ENCODE measurements at regions of chrX and their contacts with region 1.

Region 1: GRCh38 chrX:39261446-39262147 is 460.3 kb downstream of the MID1IP1 start:
- DNase-seq: peak; percentile 74
- H3K4me3 Mint-ChIP-seq: no peak overlapping the region
- H3K27ac Mint-ChIP-seq: peak overlapping the region; percentile 78
- H3K4me1 Mint-ChIP-seq: peaks cover 34% of the 10 kb centered on the region
- H3K27me3 Mint-ChIP-seq: no peaks in the 10 kb centered on the region

Region 2: GRCh38 chrX:39204945-39205344 is 56.7 kb before region 1 on chrX:
- intact Hi-C with region 1: loop called (anchors 5 kb)
- DNase-seq: no peak
- H3K4me3 Mint-ChIP-seq: peak overlapping the region; percentile 47
- H3K27ac Mint-ChIP-seq: peak overlapping the region; percentile 86
- H3K4me1 Mint-ChIP-seq: peaks cover 55% of the 10 kb centered on the region
- H3K27me3 Mint-ChIP-seq: no peaks in the 10 kb centered on the region

Region 3: DNA sequence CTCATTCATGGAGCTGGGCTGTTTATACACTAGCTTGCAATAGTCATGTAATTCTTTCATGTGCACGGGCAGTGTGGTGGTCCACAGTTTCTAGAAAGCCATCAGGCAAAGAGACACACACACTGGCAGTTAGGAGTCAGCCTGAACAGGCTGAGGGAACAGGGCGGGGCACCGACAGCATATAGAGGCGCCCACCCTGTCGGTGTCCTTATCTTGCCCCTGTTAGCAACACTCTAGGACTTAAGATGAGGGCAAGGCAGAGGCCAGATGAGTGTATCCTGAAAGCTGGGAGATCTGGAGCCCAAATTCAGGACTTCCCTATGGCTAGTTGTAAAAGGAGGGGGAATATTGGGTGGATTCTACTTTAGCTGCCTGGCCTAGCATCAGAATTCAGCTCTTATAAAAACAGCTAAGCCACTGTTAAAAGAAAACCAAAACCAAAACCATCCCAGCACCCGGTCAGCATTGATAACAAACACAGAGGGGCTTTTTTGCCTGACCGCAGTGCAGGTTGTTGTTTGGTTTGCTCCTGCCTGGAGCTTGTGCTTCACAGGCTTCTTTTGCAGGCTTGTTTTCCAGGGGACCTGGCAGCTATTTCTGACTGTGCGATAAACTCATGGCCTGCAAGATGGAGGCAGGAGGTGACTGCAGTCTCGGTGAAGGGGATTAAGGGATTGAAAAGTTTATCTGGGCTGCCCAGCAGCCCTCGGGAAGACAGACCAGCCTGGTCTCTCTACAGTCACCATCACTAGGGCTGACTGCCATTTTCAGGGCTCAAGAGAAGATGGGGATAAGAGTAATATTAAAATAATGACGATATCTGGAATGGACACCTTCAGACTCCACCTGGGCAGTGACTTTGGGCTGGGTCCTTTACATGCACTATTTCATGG is 178.6 kb after region 1 on chrX:
- intact Hi-C with region 1: loop called (anchors 5 kb)
- DNase-seq: peak; percentile 76
- H3K4me3 Mint-ChIP-seq: peak overlapping the region; percentile 62
- H3K27ac Mint-ChIP-seq: peak overlapping the region; percentile 96
- H3K4me1 Mint-ChIP-seq: peaks cover 47% of the 10 kb centered on the region
- H3K27me3 Mint-ChIP-seq: no peaks in the 10 kb centered on the region

Region 4: GRCh38 chrX:39504850-39505259 is 243.3 kb after region 1 on chrX:
- intact Hi-C with region 1: loop called (anchors 10 kb)
- DNase-seq: no peak
- H3K4me3 Mint-ChIP-seq: no peak overlapping the region
- H3K27ac Mint-ChIP-seq: no peak overlapping the region
- H3K4me1 Mint-ChIP-seq: peaks cover 15% of the 10 kb centered on the region
- H3K27me3 Mint-ChIP-seq: no peaks in the 10 kb centered on the region

Region 5: DNA sequence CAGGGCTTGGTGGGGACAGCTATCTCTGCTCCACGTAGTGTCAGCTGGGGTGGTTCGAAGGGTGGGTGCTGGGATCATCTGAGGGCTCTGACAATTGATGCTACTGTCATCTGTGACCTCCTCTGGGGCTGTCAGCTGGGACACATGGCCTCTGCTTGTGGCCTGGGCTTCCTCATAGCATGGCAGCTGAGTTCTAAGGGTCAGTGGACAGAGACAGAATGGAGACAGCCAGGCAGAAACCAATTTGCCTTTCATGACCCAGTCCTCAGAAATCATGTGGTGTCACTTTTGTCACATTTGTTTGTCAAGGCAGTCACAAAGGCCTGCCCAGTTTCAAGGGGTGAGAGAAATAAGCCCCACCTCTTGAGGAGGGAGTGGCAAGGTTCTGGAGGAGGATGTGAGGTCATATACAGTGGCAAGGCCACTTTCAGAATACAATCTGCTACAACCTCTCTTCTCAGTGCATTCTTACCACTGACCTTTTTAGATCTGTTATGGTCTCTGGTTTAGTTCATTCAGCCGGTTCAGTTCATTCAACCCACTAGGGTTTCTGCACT is 939.8 kb after region 1 on chrX:
- intact Hi-C with region 1: no loop called
- DNase-seq: peak; percentile 84
- H3K4me3 Mint-ChIP-seq: no peak overlapping the region
- H3K27ac Mint-ChIP-seq: peak overlapping the region; percentile 57
- H3K4me1 Mint-ChIP-seq: peaks cover 15% of the 10 kb centered on the region
- H3K27me3 Mint-ChIP-seq: no peaks in the 10 kb centered on the region

Measured in activated CD4-positive, alpha-beta T cell treated with anti-CD3 and anti-CD28 coated beads, Interleukin-2, amount 10 ng/mL, durations not matched to agents 24 days and 14 days (primary cell).